Activated CD4-positive, alpha-beta T cell treated with anti-CD3 and anti-CD28 coated beads for 36 hours (primary cell): ENCODE measurements at regions of chr7 and their contacts with region 1.

Region 1: GRCh38 chr7:90629297-90629918 is 33.3 kb downstream of the CDK14 start:
- DNase-seq: no peak
- ATAC-seq: peak; percentile 58
- H3K4me3 Mint-ChIP-seq: no peak overlapping the region
- H3K27ac Mint-ChIP-seq: no peak overlapping the region
- H3K4me1 Mint-ChIP-seq: no peaks in the 10 kb centered on the region
- H3K27me3 Mint-ChIP-seq: no peaks in the 10 kb centered on the region

Region 2: GRCh38 chr7:90552521-90552920 is 76.9 kb before region 1 on chr7:
- CTCF ChIA-PET with region 1: interaction called, 3 read pairs
- POLR2A ChIA-PET with region 1: no interaction called
- intact Hi-C with region 1: loop called (anchors 5 kb)
- DNase-seq: no peak
- ATAC-seq: no peak
- H3K4me3 Mint-ChIP-seq: no peak overlapping the region
- H3K27ac Mint-ChIP-seq: no peak overlapping the region
- H3K4me1 Mint-ChIP-seq: no peaks in the 10 kb centered on the region
- H3K27me3 Mint-ChIP-seq: peaks cover 5% of the 10 kb centered on the region

Region 3: DNA sequence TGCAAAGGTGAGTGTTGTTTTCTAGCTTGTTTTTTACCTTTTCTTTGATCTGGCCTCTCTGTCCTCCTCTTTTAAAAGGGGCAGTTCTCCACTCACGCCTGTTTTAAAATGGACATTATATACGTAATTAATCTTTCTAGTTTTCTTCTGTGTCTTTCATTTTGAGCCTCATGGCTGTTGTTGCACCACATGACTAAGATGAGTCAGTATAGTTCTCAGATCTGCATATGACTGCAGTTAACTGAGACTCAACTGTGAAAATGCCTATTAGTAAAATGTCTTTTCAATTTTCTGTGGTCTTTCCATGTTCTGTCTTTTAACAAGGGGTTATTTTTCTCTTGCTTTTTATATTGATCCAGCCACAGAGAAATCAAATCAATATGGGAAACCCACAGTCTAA is 262.8 kb after region 1 on chr7:
- CTCF ChIA-PET with region 1: no interaction called
- POLR2A ChIA-PET with region 1: interaction called, 10 read pairs
- intact Hi-C with region 1: no loop called
- DNase-seq: no peak
- ATAC-seq: no peak
- H3K4me3 Mint-ChIP-seq: no peak overlapping the region
- H3K27ac Mint-ChIP-seq: no peak overlapping the region
- H3K4me1 Mint-ChIP-seq: no peaks in the 10 kb centered on the region
- H3K27me3 Mint-ChIP-seq: no peaks in the 10 kb centered on the region

Region 4: GRCh38 chr7:91046322-91047089 is 417.1 kb after region 1 on chr7:
- CTCF ChIA-PET with region 1: no interaction called
- POLR2A ChIA-PET with region 1: no interaction called
- intact Hi-C with region 1: no loop called
- DNase-seq: no peak
- ATAC-seq: no peak
- H3K4me3 Mint-ChIP-seq: no peak overlapping the region
- H3K27ac Mint-ChIP-seq: no peak overlapping the region
- H3K4me1 Mint-ChIP-seq: peaks cover 9% of the 10 kb centered on the region
- H3K27me3 Mint-ChIP-seq: no peaks in the 10 kb centered on the region